ENCODE measurements at regions of chr12 and their contacts with region 1.

Region 1: DNA sequence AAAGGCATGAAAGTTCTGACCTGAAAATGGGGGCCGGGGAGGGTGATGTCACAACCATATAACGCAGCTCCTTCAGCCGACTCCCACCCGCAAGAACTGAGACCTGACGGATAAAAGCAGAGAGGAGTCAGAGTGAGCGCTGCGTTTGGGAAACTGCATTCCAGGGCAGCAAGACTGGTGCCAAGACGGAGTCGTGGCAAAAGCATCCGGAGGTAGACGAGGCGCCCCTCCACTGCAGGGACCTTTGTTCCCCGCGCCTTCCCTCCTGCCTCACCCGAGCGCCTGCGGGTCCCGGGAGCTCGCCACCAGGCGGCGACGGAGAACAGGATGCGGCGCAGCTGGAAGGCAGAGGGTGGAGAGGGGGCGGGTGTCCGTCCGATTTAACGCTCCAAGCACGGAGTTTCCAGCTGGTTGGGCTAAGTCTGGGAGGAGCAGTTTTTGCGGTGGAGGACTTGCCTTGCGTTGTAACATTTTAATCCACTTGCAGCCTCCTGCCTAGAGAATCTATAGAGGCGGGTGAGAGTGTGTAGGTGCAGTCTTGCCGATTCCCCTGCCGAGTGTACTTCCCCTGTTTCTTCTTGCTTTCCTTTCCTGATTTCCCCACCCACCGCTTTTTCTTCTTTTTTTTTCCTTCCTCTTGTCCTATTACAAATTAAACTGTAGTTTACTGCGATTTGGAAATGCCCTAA is 1.2 kb upstream of the CPNE8 start:
- DNase-seq: peak; percentile 91

Region 2: DNA sequence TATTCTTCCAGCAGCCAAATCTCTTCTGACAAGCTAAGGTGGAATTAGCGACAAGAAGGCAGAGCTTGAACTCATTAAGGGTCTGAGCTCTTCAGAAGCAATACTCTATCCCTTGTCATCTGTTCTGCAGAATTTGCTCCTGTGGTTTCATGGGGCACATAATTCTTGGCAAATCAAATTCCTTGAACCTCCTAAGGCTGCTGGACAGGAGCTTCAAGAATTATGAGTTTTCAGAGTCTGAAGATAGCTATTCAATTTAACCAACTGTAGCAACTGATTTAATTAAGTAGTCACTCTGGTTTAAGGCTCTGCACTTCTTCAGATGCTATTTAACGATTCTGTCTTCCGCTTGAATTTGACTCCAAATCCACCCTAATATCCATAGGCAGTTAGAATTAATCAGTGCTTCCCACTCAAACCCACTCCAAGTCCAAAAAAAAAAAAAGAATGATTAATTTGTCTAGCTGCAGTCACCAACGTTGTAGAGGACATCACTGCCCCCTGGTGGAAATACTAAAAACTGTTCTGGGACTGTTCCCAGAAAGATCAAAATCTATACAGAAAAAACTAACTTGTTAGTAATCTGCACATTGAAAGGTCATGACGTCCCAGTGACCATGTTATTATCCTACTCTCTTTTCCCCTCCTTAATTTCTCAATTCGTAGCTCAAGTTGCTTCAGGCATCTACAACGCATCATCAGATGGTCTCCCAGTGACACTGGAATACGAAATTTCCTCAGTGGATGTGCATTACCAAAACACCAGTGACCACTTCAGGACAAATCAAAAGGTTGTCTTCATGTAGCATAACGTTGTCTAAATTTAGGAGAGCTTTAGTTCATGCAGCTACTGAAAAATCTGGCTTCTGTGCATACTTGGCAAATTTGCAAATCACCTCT is 366.5 kb after region 1 on chr12:
- intact Hi-C with region 1: loop called (anchors 10 kb)
- DNase-seq: no peak

Measured in cardiac septum (tissue), 1 donor.